MCF 10A (cell line): ENCODE measurements at regions of chr3 and their contacts with region 1.

Region 1: GRCh38 chr3:194682694-194683310 is 2.9 kb upstream of the FAM43A start:
- DNase-seq: peak; percentile 86
- H3K4me3 Mint-ChIP-seq: no peak overlapping the region
- H3K27ac Mint-ChIP-seq: no peak overlapping the region
- H3K4me1 Mint-ChIP-seq: peaks cover 17% of the 10 kb centered on the region
- H3K27me3 Mint-ChIP-seq: no peaks in the 10 kb centered on the region
- CTCF ChIP-seq: peak; percentile 84

Region 2: DNA sequence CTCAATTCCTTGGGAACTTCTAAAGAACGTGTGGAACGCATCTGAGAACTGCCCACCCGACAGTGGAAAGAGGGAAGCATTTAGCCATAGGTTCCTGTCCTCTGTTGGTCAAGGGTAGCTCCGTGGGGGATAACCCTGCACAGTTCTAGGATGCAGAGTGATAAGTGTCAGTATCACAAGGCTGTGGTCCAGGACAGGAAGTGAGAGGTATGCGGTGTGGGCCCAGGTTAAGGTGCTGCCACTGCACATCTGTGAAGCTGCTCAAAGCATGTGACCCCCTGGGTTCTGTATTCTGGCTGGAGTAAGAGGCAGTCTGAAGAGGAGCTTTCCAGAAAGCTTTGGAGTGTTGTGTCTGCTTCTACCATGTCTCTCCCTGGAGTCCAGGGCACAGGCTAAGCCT is 598.5 kb before region 1 on chr3:
- CTCF ChIA-PET with region 1: no interaction called
- POLR2A ChIA-PET with region 1: no interaction called
- intact Hi-C with region 1: no loop called
- DNase-seq: no peak
- H3K4me3 Mint-ChIP-seq: no peak overlapping the region
- H3K27ac Mint-ChIP-seq: no peak overlapping the region
- H3K4me1 Mint-ChIP-seq: peaks cover 4% of the 10 kb centered on the region
- H3K27me3 Mint-ChIP-seq: no peaks in the 10 kb centered on the region
- CTCF ChIP-seq: no peak

Region 3: GRCh38 chr3:194952841-194953241 is 270.0 kb after region 1 on chr3:
- CTCF ChIA-PET with region 1: no interaction called
- POLR2A ChIA-PET with region 1: no interaction called
- intact Hi-C with region 1: loop called (anchors 5 kb)
- DNase-seq: no peak
- H3K4me3 Mint-ChIP-seq: no peak overlapping the region
- H3K27ac Mint-ChIP-seq: no peak overlapping the region
- H3K4me1 Mint-ChIP-seq: no peaks in the 10 kb centered on the region
- H3K27me3 Mint-ChIP-seq: no peaks in the 10 kb centered on the region
- CTCF ChIP-seq: no peak

Region 4: GRCh38 chr3:195030791-195031321 is 348.1 kb after region 1 on chr3:
- CTCF ChIA-PET with region 1: interaction called, 7 read pairs
- POLR2A ChIA-PET with region 1: interaction called, 4 read pairs
- intact Hi-C with region 1: loop called (anchors 5 kb)
- DNase-seq: peak; percentile 77
- H3K4me3 Mint-ChIP-seq: peak overlapping the region; percentile 25
- H3K27ac Mint-ChIP-seq: peak overlapping the region; percentile 91
- H3K4me1 Mint-ChIP-seq: peaks cover 17% of the 10 kb centered on the region
- H3K27me3 Mint-ChIP-seq: no peaks in the 10 kb centered on the region
- CTCF ChIP-seq: no peak

Region 5: GRCh38 chr3:195187609-195188425 is 505.0 kb after region 1 on chr3:
- CTCF ChIA-PET with region 1: interaction called, 4 read pairs
- POLR2A ChIA-PET with region 1: interaction called, 16 read pairs
- intact Hi-C with region 1: no loop called
- DNase-seq: peak; percentile 60
- H3K4me3 Mint-ChIP-seq: peak overlapping the region; percentile 35
- H3K27ac Mint-ChIP-seq: peak overlapping the region; percentile 98
- H3K4me1 Mint-ChIP-seq: peaks cover 34% of the 10 kb centered on the region
- H3K27me3 Mint-ChIP-seq: no peaks in the 10 kb centered on the region
- CTCF ChIP-seq: no peak

Region 6: GRCh38 chr3:195271116-195271858 is 588.5 kb after region 1 on chr3 and contains the start of gene XXYLT1:
- CTCF ChIA-PET with region 1: interaction called, 69 read pairs
- POLR2A ChIA-PET with region 1: interaction called, 25 read pairs
- intact Hi-C with region 1: no loop called
- DNase-seq: peak; percentile 85
- H3K4me3 Mint-ChIP-seq: peak within 1 kb of the TSS; percentile 81
- H3K27ac Mint-ChIP-seq: peak within 1 kb of the TSS; percentile 69
- H3K4me1 Mint-ChIP-seq: peaks cover 27% of the 10 kb centered on the region
- H3K27me3 Mint-ChIP-seq: no peaks in the 10 kb centered on the region
- CTCF ChIP-seq: peak; percentile 90
- total RNA-seq, gene XXYLT1: 10.0 and 10.9 TPM in 2 replicates